Activated CD8-positive, alpha-beta memory T cell treated with anti-CD3 and anti-CD28 coated beads, Interleukin-2, amount 10 ng/mL, durations not matched to agents 7 days and 5 days (primary cell): ENCODE measurements at regions of chr2 and their contacts with region 1.

Region 1: DNA sequence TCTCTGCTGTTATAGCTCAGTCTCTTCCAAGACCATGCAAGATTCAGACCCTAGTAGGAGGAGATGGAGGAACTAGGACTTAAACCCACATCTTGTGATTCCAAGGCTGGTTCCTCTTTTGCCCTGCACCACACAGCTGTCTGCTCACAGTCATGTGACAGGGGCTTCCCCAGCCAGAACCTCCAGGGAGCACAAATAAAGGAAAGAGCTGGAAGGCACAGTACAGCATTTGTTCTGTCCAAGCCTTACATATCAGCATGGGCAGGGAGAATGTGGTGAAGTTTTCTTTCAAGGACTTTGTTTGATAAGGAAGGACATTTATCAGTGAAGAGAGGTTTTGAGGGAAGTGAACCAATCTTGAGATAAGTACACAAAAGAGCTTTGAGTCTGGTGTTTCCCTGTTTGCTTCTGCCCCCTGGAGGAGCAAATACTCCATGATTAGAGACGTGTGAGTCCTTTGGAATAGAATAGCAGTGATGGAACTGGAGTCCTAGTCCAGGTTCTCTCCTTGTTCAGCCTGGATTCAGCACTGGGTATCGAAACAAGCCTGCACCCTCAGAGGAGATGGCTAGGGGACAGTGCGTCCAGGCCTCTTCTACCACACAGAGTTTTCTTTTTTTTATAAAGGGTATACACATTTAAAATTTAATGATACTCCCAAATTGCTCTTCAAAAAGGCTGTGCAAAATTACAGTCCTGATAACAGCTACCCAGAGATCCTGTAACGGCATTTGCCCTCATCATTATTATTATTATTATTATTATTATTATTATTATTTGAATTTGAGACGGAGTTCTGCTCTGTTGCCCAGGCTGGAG is 24.6 kb upstream of the CASP10 start:
- DNase-seq: peak; percentile 74
- ATAC-seq: peak; percentile 84
- H3K4me3 Mint-ChIP-seq: no peak overlapping the region
- H3K27ac Mint-ChIP-seq: peak overlapping the region; percentile 84
- H3K4me1 Mint-ChIP-seq: peaks cover 14% of the 10 kb centered on the region
- H3K27me3 Mint-ChIP-seq: no peaks in the 10 kb centered on the region

Region 2: DNA sequence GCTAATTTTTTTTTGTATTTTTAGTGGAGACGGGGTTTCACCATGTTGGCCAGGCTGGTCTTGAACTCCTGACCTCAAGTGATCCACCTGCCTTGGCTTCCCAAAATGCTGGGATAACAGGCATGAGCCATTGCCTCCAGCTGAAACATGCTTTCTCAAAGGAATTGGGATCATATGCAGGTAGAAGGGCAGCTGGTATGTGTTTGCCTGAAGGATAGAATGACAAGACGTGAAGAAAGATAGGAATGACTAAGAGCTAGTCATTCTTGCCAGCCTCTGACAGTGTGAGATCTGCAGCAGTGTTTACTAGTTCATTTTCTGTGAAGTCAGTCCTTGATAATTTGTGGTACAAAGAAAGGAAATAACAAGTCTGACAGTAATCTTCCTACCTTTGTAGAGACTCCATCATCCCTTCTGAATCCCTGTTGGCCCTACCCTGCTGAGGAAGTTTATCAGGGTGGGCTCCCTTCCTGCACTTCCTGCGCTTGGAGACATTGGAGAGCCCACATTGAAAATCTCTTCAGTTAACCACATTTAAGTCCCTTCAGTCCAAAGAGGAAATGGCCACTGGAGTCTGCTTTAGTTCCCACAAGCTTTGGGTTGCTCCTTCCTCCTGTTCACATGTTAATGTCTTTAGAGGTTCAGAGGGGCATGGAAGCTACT is 27.7 kb before region 1 on chr2:
- CTCF ChIA-PET with region 1: interaction called, 13 read pairs
- DNase-seq: peak; percentile 70
- ATAC-seq: peak; percentile 58
- H3K4me3 Mint-ChIP-seq: peak overlapping the region; percentile 77
- H3K27ac Mint-ChIP-seq: peak overlapping the region; percentile 96
- H3K4me1 Mint-ChIP-seq: peaks cover 76% of the 10 kb centered on the region
- H3K27me3 Mint-ChIP-seq: no peaks in the 10 kb centered on the region

Region 3: DNA sequence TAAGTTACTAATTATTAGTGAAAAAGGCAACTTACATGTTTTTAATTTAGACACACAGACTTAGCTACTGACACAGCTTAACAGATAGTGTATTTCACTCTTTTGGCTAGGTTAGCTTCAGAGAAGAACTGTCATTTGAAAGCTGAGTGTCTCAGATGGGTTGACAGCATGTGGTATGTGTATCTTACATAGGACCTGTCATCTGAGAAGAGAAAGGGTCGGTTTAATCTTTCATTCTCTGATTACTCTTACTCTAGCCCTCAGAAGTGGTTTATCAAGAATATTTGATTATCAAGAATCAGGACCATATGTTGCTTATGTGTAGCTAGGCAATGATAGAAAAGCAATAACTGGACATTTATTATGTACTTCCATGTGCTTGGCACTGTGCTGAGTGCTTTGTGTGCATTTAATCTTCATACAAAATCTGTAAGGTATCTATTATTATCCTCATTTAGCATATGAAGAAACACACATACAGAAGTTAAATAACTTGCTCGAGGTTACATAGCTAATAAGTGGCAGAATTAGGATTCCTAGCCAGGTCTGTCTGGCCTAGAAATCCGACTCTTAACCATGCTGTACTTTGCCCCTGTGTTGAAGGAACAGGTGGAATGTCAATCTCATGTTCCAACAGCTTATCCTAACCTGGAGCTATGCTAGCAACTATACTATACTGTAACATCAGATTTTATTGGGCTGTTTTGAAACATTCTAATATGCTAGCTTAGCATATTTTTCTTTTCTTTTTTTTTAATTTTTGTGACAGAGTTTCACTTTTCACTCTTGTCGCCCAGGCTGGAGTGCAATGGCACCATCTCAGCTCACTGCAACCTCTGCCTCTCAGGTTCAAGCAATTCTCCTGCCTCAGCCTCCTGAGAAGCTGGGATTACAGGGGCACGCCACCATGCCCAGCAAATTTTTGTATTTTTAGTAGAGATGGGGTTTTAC is 13.9 kb before region 1 on chr2:
- CTCF ChIA-PET with region 1: interaction called, 16 read pairs
- DNase-seq: no peak
- ATAC-seq: no peak
- H3K4me3 Mint-ChIP-seq: no peak overlapping the region
- H3K27ac Mint-ChIP-seq: no peak overlapping the region
- H3K4me1 Mint-ChIP-seq: peaks cover 14% of the 10 kb centered on the region
- H3K27me3 Mint-ChIP-seq: no peaks in the 10 kb centered on the region

Region 4: GRCh38 chr2:201344663-201345366 is 186.5 kb after region 1 on chr2:
- CTCF ChIA-PET with region 1: no interaction called
- DNase-seq: no peak
- ATAC-seq: no peak
- H3K4me3 Mint-ChIP-seq: no peak overlapping the region
- H3K27ac Mint-ChIP-seq: no peak overlapping the region
- H3K4me1 Mint-ChIP-seq: peaks cover 12% of the 10 kb centered on the region
- H3K27me3 Mint-ChIP-seq: no peaks in the 10 kb centered on the region